Activated CD8-positive, alpha-beta memory T cell treated with anti-CD3 and anti-CD28 coated beads, Interleukin-2, amount 10 ng/mL, durations not matched to agents 7 days and 5 days (primary cell): ENCODE measurements at regions of chr9 and their contacts with region 1.

Region 1: DNA sequence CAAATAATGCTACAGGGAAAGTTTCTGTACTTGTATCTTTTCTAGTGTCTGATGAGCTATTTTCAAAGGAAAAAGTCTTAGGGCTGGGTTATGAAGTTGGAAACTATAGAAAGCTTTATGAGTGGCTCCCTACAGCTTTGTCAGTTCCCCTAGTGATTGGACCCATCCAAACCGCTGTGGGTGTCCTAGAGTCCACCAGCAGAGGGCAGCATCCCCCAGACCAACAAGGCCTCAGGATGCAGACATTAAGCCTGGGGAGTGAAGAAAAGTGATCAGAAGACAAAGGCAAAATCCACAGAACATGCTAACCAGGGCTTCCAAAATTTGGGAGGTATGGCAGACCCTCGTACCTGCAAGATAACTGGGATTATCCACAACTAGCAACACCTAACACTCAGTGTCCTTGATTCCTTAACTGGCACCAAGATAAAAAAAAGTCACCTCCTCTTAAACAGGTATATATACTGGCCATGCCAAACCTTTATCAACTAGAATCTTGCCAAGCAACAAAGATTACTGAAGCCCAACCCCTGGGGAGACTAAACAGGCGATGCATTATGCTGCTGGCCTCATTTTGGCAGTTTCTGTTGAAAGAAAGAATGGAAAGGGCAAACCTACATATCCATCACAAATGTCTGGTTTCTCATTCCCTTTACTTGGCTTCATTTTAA is 110.4 kb upstream of the NR5A1 start:
- DNase-seq: peak; percentile 80
- ATAC-seq: peak; percentile 85
- H3K4me3 Mint-ChIP-seq: no peak overlapping the region
- H3K27ac Mint-ChIP-seq: no peak overlapping the region
- H3K4me1 Mint-ChIP-seq: no peaks in the 10 kb centered on the region
- H3K27me3 Mint-ChIP-seq: peaks cover 15% of the 10 kb centered on the region

Region 2: GRCh38 chr9:124544535-124544934 is 73.1 kb before region 1 on chr9:
- CTCF ChIA-PET with region 1: no interaction called
- DNase-seq: no peak
- ATAC-seq: no peak
- H3K4me3 Mint-ChIP-seq: no peak overlapping the region
- H3K27ac Mint-ChIP-seq: no peak overlapping the region
- H3K4me1 Mint-ChIP-seq: peaks cover 8% of the 10 kb centered on the region
- H3K27me3 Mint-ChIP-seq: peaks cover 41% of the 10 kb centered on the region

Region 3: GRCh38 chr9:124658165-124659017 is 40.8 kb after region 1 on chr9:
- CTCF ChIA-PET with region 1: interaction called, 17 read pairs
- DNase-seq: peak; percentile 54
- ATAC-seq: peak; percentile 89
- H3K4me3 Mint-ChIP-seq: peak overlapping the region; percentile 80
- H3K27ac Mint-ChIP-seq: no peak overlapping the region
- H3K4me1 Mint-ChIP-seq: peaks cover 14% of the 10 kb centered on the region
- H3K27me3 Mint-ChIP-seq: peaks cover 56% of the 10 kb centered on the region

Region 4: GRCh38 chr9:124784509-124784908 is 166.9 kb after region 1 on chr9:
- CTCF ChIA-PET with region 1: no interaction called
- DNase-seq: peak; percentile 3
- ATAC-seq: no peak
- H3K4me3 Mint-ChIP-seq: no peak overlapping the region
- H3K27ac Mint-ChIP-seq: no peak overlapping the region
- H3K4me1 Mint-ChIP-seq: no peaks in the 10 kb centered on the region
- H3K27me3 Mint-ChIP-seq: peaks cover 2% of the 10 kb centered on the region